ENCODE measurements at regions of chr17 and their contacts with region 1.

Region 1: GRCh38 chr17:47066841-47067682 is 88.0 kb upstream of the RPRML start:
- DNase-seq: peak; percentile 54 to 92 (median 71)
- ATAC-seq: peak; percentile 97
- H3K4me3 ChIP-seq: peak overlapping the region; percentile 62
- H3K4me3 Mint-ChIP-seq: peak overlapping the region; percentile 95
- H3K27ac ChIP-seq: peak overlapping the region; percentile 71 to 72
- H3K27ac Mint-ChIP-seq: peak overlapping the region; percentile 94
- H3K4me1 ChIP-seq: peaks cover 13% of the 10 kb centered on the region
- H3K4me1 Mint-ChIP-seq: peaks cover 37% of the 10 kb centered on the region
- H3K27me3 ChIP-seq: no peaks in the 10 kb centered on the region
- H3K27me3 Mint-ChIP-seq: no peaks in the 10 kb centered on the region
- CTCF ChIP-seq: no peak

Region 2: DNA sequence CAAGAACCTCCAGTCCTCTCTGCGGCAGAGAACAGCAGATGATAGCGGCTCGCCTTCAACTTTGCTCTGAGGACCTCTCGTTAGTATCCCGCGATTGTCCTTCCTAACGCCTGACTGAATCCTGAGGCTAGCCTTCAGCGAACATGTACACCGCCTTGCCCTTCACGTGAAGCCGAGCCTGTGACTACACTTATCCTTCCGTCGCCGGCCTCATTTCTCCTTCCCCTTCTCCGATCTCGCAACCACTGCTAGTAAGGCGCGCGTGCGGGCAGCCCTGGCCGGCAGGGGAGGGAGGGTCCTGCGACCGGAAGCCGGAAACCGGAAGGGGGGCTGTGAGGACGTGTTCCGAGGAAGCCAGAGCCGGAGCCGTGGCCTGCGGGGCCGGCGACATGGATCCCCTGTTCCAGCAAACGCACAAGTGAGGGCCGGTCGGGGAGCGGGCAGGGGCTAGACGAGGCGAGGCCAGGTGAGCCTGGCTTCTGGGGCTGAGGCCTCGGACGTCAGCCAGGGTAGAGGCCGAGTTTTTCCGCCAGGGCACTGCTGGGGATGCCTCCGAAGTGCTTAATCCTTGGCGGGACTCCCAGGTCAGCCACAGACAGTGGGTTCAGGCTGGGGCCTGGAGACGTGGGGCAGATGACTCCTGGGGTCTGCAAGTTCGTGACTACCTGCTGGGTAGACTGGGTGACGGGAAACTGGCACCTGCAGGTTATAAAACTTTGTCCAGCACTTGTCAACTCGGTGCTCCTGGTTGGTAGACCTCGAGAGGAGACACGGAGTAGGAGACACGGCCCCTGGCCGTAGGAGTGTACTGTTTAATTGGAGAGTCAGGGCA is 144.0 kb before region 1 on chr17 and contains the start of gene GOSR2:
- CTCF ChIA-PET with region 1: no interaction called
- POLR2A ChIA-PET with region 1: no interaction called
- intact Hi-C with region 1: loop called in 1 of 2 experiments (anchors 10 kb)
- DNase-seq: peak; percentile 78 to 93 (median 88)
- ATAC-seq: peak; percentile 90
- H3K4me3 ChIP-seq: peak within 1 kb of the TSS; percentile 90
- H3K4me3 Mint-ChIP-seq: peak within 1 kb of the TSS; percentile 97
- H3K27ac ChIP-seq: peak within 1 kb of the TSS; percentile 90 to 95
- H3K27ac Mint-ChIP-seq: peak within 1 kb of the TSS; percentile 99
- H3K4me1 ChIP-seq: peaks cover 7% of the 10 kb centered on the region
- H3K4me1 Mint-ChIP-seq: peaks cover 57% of the 10 kb centered on the region
- H3K27me3 ChIP-seq: no peaks in the 10 kb centered on the region
- H3K27me3 Mint-ChIP-seq: no peaks in the 10 kb centered on the region
- CTCF ChIP-seq: no peak
- total RNA-seq, gene GOSR2: 46.6 to 51.7 TPM

Region 3: DNA sequence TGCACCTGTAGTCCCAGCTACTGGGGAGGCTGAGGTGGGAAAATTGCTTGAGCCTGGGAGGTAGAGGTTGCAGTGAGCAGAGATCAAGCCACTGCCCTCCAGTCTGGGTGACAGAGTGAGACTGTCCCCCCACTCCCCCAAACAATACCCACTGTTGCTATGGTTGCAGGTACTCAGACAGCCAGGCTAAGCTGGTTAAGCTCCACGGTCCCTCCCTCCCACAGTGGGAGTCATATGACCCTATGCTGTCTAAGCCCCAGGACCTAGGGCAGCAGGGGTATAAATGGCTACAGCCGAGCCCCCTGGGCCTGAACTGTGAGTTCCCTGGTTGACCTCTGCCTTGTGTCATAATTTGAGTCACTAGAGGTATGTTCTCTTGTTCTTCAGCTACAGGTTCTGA is 72.1 kb before region 1 on chr17:
- CTCF ChIA-PET with region 1: no interaction called
- POLR2A ChIA-PET with region 1: no interaction called
- intact Hi-C with region 1: no loop called
- DNase-seq: no peak
- ATAC-seq: no peak
- H3K4me3 ChIP-seq: no peak overlapping the region
- H3K4me3 Mint-ChIP-seq: no peak overlapping the region
- H3K27ac ChIP-seq: no peak overlapping the region
- H3K27ac Mint-ChIP-seq: no peak overlapping the region
- H3K4me1 ChIP-seq: no peaks in the 10 kb centered on the region
- H3K4me1 Mint-ChIP-seq: no peaks in the 10 kb centered on the region
- H3K27me3 ChIP-seq: no peaks in the 10 kb centered on the region
- H3K27me3 Mint-ChIP-seq: no peaks in the 10 kb centered on the region
- CTCF ChIP-seq: no peak

Region 4: GRCh38 chr17:47085736-47086135 is 18.7 kb after region 1 on chr17:
- CTCF ChIA-PET with region 1: no interaction called
- POLR2A ChIA-PET with region 1: no interaction called
- intact Hi-C with region 1: no loop called
- DNase-seq: no peak
- ATAC-seq: no peak
- H3K4me3 ChIP-seq: no peak overlapping the region
- H3K4me3 Mint-ChIP-seq: no peak overlapping the region
- H3K27ac ChIP-seq: no peak overlapping the region
- H3K27ac Mint-ChIP-seq: no peak overlapping the region
- H3K4me1 ChIP-seq: no peaks in the 10 kb centered on the region
- H3K4me1 Mint-ChIP-seq: peaks cover 51% of the 10 kb centered on the region
- H3K27me3 ChIP-seq: no peaks in the 10 kb centered on the region
- H3K27me3 Mint-ChIP-seq: no peaks in the 10 kb centered on the region
- CTCF ChIP-seq: no peak

Region 5: GRCh38 chr17:47099987-47100711 is 33.1 kb after region 1 on chr17:
- CTCF ChIA-PET with region 1: no interaction called
- POLR2A ChIA-PET with region 1: interaction called, 4 read pairs
- intact Hi-C with region 1: loop called in 1 of 2 experiments (anchors 2 kb)
- DNase-seq: peak; percentile 80 to 92 (median 88)
- ATAC-seq: peak; percentile 100
- H3K4me3 ChIP-seq: peak overlapping the region; percentile 60
- H3K4me3 Mint-ChIP-seq: peak overlapping the region; percentile 100
- H3K27ac ChIP-seq: no peak overlapping the region
- H3K27ac Mint-ChIP-seq: peak overlapping the region; percentile 89
- H3K4me1 ChIP-seq: peaks cover 36% of the 10 kb centered on the region
- H3K4me1 Mint-ChIP-seq: peaks cover 37% of the 10 kb centered on the region
- H3K27me3 ChIP-seq: no peaks in the 10 kb centered on the region
- H3K27me3 Mint-ChIP-seq: no peaks in the 10 kb centered on the region
- CTCF ChIP-seq: no peak

Measured in CD4-positive, alpha-beta T cell (primary cell).